A673 (cell line): ENCODE measurements at regions of chr18 and their contacts with region 1.

Region 1: GRCh38 chr18:57621246-57621604 is 411 bp downstream of the NARS1 start:
- DNase-seq: no peak
- H3K4me3 ChIP-seq: peak overlapping the region; percentile 90
- H3K27ac ChIP-seq: peak overlapping the region; percentile 94
- H3K4me1 ChIP-seq: peaks cover 18% of the 10 kb centered on the region
- H3K27me3 ChIP-seq: no peaks in the 10 kb centered on the region
- CTCF ChIP-seq: no peak

Region 2: DNA sequence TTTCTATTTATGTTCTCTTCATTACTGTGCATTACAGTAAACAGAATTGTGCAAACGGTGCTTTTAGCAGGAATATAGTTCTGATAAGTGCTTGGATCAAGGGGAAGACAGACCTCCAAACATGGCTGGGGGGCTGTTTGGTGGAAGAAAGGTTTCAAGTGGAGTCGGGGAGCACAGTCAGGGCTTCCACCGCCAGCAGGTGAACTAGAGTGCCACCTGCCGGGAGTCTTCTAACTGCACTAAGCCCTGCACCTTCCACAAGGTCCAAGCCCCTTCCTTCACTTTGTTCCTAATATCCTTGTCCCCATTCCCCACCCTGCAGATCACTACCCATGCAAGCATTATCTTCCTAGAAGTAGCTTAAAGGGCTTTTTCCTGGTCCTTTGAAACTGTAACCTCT is 174.9 kb before region 1 on chr18:
- CTCF ChIA-PET with region 1: interaction called, 12 read pairs
- POLR2A ChIA-PET with region 1: no interaction called
- intact Hi-C with region 1: no loop called
- DNase-seq: no peak
- H3K4me3 ChIP-seq: no peak overlapping the region
- H3K27ac ChIP-seq: no peak overlapping the region
- H3K4me1 ChIP-seq: no peaks in the 10 kb centered on the region
- H3K27me3 ChIP-seq: peaks cover 77% of the 10 kb centered on the region
- CTCF ChIP-seq: peak; percentile 59

Region 3: DNA sequence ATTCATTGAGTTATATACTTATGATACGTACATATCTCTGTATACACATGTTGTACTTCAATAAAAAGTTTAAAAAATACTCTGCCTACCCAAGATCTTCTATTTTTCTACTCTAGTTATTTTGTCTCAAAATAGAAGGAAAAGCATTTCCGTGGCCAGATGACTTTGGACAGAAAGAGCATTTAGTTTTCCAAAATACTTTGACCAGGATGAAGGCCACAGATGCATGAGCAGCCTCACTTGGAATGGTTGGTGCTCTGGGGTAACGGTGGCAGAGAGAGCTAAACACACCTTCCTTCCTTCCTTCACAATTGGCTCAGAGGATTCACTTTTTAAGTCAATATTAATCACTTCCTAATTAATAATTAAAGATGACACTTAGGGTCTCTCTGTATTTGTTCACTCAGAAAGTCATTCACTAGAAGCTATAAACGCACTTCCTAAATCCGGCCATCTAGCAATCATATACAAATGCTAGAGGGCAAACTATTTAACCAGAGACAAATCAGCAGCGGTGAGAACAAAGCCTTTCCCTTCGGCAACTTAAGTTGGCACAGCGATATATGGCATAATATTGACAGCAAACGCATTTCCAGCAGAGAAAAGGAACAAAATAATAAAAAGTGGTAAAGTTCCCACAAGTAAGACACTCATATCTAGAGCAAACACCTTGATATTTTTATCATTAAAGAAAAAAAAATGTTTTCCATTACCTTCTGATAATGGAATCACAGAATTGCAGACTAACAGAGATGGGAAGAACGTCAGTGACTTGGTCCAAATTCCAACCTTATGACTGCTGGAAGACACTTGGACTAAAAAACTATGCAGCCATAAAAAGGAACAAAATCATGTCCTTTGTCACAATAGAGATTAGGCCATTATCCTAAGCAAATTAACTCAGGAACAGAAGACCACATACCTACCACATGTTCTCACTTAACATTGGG is 56.3 kb after region 1 on chr18:
- CTCF ChIA-PET with region 1: no interaction called
- POLR2A ChIA-PET with region 1: interaction called, 11 read pairs
- intact Hi-C with region 1: no loop called
- DNase-seq: no peak
- H3K4me3 ChIP-seq: no peak overlapping the region
- H3K27ac ChIP-seq: no peak overlapping the region
- H3K4me1 ChIP-seq: no peaks in the 10 kb centered on the region
- H3K27me3 ChIP-seq: no peaks in the 10 kb centered on the region
- CTCF ChIP-seq: no peak

Region 4: GRCh38 chr18:57806978-57807285 is 185.7 kb after region 1 on chr18:
- CTCF ChIA-PET with region 1: no interaction called
- POLR2A ChIA-PET with region 1: no interaction called
- intact Hi-C with region 1: loop called (anchors 5 kb)
- DNase-seq: peak; percentile 50
- H3K4me3 ChIP-seq: no peak overlapping the region
- H3K27ac ChIP-seq: peak overlapping the region; percentile 57
- H3K4me1 ChIP-seq: peaks cover 34% of the 10 kb centered on the region
- H3K27me3 ChIP-seq: no peaks in the 10 kb centered on the region
- CTCF ChIP-seq: no peak

Region 5: GRCh38 chr18:58128381-58129374 is 507.5 kb after region 1 on chr18:
- CTCF ChIA-PET with region 1: no interaction called
- POLR2A ChIA-PET with region 1: no interaction called
- intact Hi-C with region 1: loop called (anchors 10 kb)
- DNase-seq: no peak
- H3K4me3 ChIP-seq: no peak overlapping the region
- H3K27ac ChIP-seq: no peak overlapping the region
- H3K4me1 ChIP-seq: no peaks in the 10 kb centered on the region
- H3K27me3 ChIP-seq: peaks cover 25% of the 10 kb centered on the region
- CTCF ChIP-seq: no peak